BJ (cell line): ENCODE measurements at regions of chr5 and their contacts with region 1.

Region 1: GRCh38 chr5:159316519-159317383 is 13.5 kb downstream of the IL12B start:
- DNase-seq: no peak
- H3K4me3 ChIP-seq: no peak overlapping the region
- H3K27me3 ChIP-seq: peaks cover 6% of the 10 kb centered on the region; the same call in 1 of the 2 replicates
- CTCF ChIP-seq: peak; percentile 72

Region 2: DNA sequence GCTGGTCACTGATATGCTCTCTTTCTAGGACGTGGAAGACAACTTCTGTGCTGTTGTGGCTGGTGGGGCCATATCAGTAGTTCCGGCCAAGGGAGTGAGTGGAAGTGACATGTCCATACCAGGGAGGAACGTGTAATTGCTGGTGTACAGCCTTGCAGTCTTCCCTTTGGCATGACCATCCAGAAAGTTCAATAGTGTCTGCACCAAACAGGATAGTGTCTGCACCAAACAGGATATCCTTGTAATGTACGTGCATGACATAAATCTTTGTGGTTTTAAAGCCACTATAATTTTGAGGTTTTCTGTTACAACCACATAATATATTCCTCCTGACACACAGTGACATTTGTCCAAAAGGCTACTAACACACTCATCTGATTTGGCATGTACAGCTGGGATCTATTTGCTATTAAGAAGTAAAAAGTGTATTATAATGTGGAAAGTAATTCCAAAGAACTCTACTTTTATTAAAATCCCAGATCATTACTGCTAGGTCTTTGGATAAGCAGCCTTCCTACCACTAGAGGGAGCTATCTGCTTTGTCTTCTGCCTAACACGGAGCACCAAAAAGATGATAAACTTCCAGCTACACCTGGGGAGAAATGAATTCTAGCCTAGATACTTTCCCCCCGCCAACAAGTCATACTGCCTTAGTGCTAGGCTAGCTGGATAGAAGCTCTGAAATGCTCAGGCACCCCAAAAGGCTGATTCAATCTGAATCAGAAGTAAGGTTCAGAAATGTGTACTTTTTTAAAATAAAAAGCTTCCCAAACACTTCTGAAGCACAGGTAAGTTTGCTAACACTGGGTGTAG is 160.1 kb before region 1 on chr5:
- CTCF ChIA-PET with region 1: interaction called, 55 read pairs
- POLR2A ChIA-PET with region 1: no interaction called
- DNase-seq: no peak
- H3K4me3 ChIP-seq: no peak overlapping the region
- H3K27me3 ChIP-seq: no peaks in the 10 kb centered on the region
- CTCF ChIP-seq: peak; percentile 82

Region 3: GRCh38 chr5:159286420-159287035 is 30.2 kb before region 1 on chr5:
- CTCF ChIA-PET with region 1: interaction called, 34 read pairs
- POLR2A ChIA-PET with region 1: no interaction called
- DNase-seq: no peak
- H3K4me3 ChIP-seq: no peak overlapping the region
- H3K27me3 ChIP-seq: no peaks in the 10 kb centered on the region
- CTCF ChIP-seq: peak; percentile 55

Region 4: DNA sequence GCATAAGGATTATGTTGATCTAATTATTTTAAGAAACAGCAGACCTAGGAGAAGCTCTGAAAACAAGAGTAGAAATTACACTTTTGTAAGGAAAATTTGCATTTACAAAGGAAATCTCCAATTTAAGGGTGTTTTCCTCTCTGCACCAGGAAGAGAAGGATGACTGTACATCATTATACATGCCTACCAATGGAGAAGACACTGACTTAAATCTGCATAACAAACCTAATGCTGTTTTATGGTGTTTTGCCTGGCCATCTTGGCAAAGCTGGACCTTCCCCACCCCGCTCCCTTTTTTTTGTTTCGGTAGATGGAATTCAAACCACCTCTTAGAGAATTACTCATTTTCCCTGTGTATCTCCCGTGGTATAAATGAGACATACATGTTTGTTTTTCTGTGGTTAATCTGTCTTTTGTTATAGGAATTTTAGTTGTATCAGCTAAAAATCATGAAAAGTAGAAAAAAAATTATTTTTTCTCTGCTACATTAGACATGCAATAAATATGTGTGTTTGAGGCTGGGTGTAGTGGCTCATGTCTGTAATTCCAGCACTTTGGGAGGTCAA is 15.3 kb before region 1 on chr5:
- CTCF ChIA-PET with region 1: interaction called, 13 read pairs
- POLR2A ChIA-PET with region 1: no interaction called
- DNase-seq: no peak
- H3K4me3 ChIP-seq: no peak overlapping the region
- H3K27me3 ChIP-seq: peaks cover 7% of the 10 kb centered on the region
- CTCF ChIP-seq: no peak

Region 5: GRCh38 chr5:159331093-159331973 is 14.6 kb after region 1 on chr5:
- CTCF ChIA-PET with region 1: interaction called, 18 read pairs
- POLR2A ChIA-PET with region 1: no interaction called
- DNase-seq: no peak
- H3K4me3 ChIP-seq: peak overlapping the region; percentile 48
- H3K27me3 ChIP-seq: no peaks in the 10 kb centered on the region; the same call in 1 of the 2 replicates
- CTCF ChIP-seq: peak; percentile 87